Adrenal gland (tissue), 19 donors: ENCODE measurements at regions of chr11 and their contacts with region 1.

Region 1: DNA sequence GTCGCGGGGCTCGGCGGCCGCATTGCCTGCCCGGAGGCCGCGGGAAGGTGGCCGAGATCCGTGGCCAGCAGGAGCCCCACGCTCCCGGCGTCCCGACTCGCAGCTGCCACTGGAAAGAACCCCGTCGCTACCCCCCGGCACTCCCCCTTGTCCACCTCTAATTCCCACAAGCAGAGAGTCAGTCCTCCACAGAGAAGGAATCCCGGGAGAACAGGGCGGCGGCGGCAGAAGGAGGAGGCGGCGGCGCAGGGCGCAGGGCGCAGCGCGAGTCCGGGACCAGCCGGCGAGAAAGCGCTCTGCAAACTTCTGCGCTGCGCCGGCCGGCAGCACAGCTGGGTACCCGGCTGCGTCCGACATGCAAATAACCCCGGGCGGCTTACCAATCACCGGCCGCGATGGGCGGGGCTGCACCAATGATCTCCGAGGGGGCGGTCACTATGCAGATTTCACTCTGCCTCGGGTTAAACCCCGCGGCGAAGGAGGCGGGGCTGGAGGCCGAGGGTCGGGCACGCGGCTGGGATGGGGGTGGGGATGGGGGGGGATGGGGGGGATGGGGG is at the start of gene ABTB2:
- DNase-seq: peak; percentile 98 to 99 (median 99)
- H3K4me3 ChIP-seq: peak within 1 kb of the TSS; percentile 10 to 60 (median 38)
- H3K27ac ChIP-seq: peak within 1 kb of the TSS in 4 of 5 donors; percentile 67 to 88 (median 84)
- H3K4me1 ChIP-seq: peaks cover 10 to 39% of the 10 kb centered on the region in 2 donors
- H3K27me3 ChIP-seq: no peaks in the 10 kb centered on the region
- CTCF ChIP-seq: no peak
- POLR2A ChIP-seq: peak; percentile 91 to 98
- total RNA-seq, gene ABTB2: 3.7 to 32.3 (median 6.5) TPM

Region 2: GRCh38 chr11:34243726-34244464 is 113.9 kb before region 1 on chr11:
- intact Hi-C with region 1: loop called in 1 of 2 experiments (anchors 10 kb)
- DNase-seq: peak in 6 of 7 donors; percentile 48 to 63 (median 62)
- H3K4me3 ChIP-seq: no peak overlapping the region
- H3K27ac ChIP-seq: peak overlapping the region in 3 of 5 donors; percentile 15 to 66 (median 61)
- H3K4me1 ChIP-seq: peaks cover 11 to 21% of the 10 kb centered on the region in 2 donors
- H3K27me3 ChIP-seq: no peaks in the 10 kb centered on the region
- CTCF ChIP-seq: no peak
- POLR2A ChIP-seq: no peak

Region 3: GRCh38 chr11:34302046-34302921 is 55.5 kb before region 1 on chr11:
- intact Hi-C with region 1: no loop called
- DNase-seq: no peak
- H3K4me3 ChIP-seq: no peak overlapping the region
- H3K27ac ChIP-seq: peak overlapping the region in 1 of 5 donors; percentile 41
- H3K4me1 ChIP-seq: peaks cover 0 to 7% of the 10 kb centered on the region in 2 donors
- H3K27me3 ChIP-seq: no peaks in the 10 kb centered on the region
- CTCF ChIP-seq: no peak
- POLR2A ChIP-seq: no peak